ENCODE measurements at regions of chr6 and their contacts with region 1.

Region 1: GRCh38 chr6:47188588-47189021 is 121.1 kb downstream of the TNFRSF21 start:
- DNase-seq: peak; percentile 82 to 94
- H3K4me3 ChIP-seq: no peak overlapping the region
- H3K4me3 Mint-ChIP-seq: peak overlapping the region; percentile 23
- H3K27ac Mint-ChIP-seq: peak overlapping the region; percentile 96
- H3K4me1 ChIP-seq: peaks cover 38% of the 10 kb centered on the region
- H3K4me1 Mint-ChIP-seq: peaks cover 36% of the 10 kb centered on the region
- H3K27me3 ChIP-seq: no peaks in the 10 kb centered on the region
- H3K27me3 Mint-ChIP-seq: no peaks in the 10 kb centered on the region
- CTCF ChIP-seq: no peak

Region 2: DNA sequence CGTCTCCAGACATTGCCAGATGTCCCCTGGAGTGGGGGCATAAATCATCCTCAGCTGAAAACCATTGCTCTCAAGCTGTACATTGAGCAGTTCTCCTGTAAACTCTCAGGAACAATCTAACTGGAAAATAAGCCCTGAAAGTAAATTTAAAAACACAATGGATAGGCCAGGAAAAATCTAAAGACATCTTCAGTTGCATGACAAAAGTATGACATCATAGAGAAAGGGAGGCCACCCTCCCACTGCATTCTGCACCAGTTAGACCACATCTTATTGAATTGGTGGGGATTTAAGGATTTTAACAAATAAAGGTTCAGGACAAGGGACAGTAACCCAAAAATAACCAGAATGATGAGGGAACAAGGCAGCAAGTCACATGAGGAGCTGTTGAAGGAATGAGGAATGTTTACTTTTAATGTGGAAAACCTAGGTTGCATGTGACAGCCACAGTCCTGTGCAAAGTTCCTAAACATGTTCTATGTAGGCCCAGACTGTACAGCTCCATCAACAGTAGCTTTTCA is 458.7 kb before region 1 on chr6:
- CTCF ChIA-PET with region 1: no interaction called
- POLR2A ChIA-PET with region 1: no interaction called
- intact Hi-C with region 1: no loop called
- DNase-seq: no peak
- H3K4me3 ChIP-seq: no peak overlapping the region
- H3K4me3 Mint-ChIP-seq: no peak overlapping the region
- H3K27ac Mint-ChIP-seq: no peak overlapping the region
- H3K4me1 ChIP-seq: no peaks in the 10 kb centered on the region
- H3K4me1 Mint-ChIP-seq: peaks cover 7% of the 10 kb centered on the region
- H3K27me3 ChIP-seq: peaks cover 1% of the 10 kb centered on the region; the same call in 1 of the 2 replicates
- H3K27me3 Mint-ChIP-seq: peaks cover 10% of the 10 kb centered on the region
- CTCF ChIP-seq: no peak

Region 3: GRCh38 chr6:47111685-47112084 is 76.9 kb before region 1 on chr6:
- CTCF ChIA-PET with region 1: interaction called, 4 read pairs
- POLR2A ChIA-PET with region 1: no interaction called
- intact Hi-C with region 1: loop called (anchors 1 kb)
- DNase-seq: peak; percentile 72 to 88
- H3K4me3 ChIP-seq: no peak overlapping the region
- H3K4me3 Mint-ChIP-seq: peak overlapping the region; percentile 36
- H3K27ac Mint-ChIP-seq: peak overlapping the region; percentile 68
- H3K4me1 ChIP-seq: peaks cover 65% of the 10 kb centered on the region
- H3K4me1 Mint-ChIP-seq: peaks cover 36% of the 10 kb centered on the region
- H3K27me3 ChIP-seq: no peaks in the 10 kb centered on the region
- H3K27me3 Mint-ChIP-seq: no peaks in the 10 kb centered on the region
- CTCF ChIP-seq: no peak

Region 4: DNA sequence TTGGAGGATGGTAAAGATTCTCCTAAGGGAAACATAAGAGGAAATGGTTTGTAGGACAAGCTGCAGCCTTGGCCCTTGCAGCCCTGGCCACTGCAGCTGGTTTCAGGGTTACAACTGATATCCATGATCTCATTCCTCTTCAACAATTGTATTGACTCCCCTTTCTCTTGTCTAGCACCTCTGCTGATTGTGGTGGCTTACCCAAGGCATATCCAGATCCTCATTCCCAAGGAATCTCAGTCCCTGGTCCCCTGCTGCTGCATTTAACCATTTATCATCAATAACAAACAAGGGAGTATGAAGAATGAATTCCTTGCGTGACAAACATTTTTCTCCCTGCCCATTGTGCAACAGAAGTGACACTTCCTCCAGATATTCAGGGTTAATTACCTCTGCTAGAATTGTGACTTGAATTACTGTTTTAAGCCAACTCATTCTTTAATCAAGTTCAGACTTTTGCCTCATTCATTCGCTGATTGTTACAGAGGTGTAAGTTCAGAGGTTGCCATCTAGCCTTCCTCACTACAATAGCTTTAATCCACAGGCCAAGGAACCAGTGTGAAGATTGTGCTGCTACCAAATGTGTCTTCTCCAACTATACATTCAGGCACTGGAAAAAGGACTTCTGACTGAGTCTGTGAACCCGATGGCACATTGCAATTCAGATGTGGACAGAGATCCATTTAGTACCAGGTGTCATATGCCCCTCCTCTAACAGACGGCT is 35.4 kb before region 1 on chr6:
- CTCF ChIA-PET with region 1: no interaction called
- POLR2A ChIA-PET with region 1: no interaction called
- intact Hi-C with region 1: loop called (anchors 1 kb)
- DNase-seq: peak; percentile 34 to 47
- H3K4me3 ChIP-seq: no peak overlapping the region
- H3K4me3 Mint-ChIP-seq: no peak overlapping the region
- H3K27ac Mint-ChIP-seq: peak overlapping the region; percentile 62
- H3K4me1 ChIP-seq: peaks cover 43% of the 10 kb centered on the region
- H3K4me1 Mint-ChIP-seq: peaks cover 25% of the 10 kb centered on the region
- H3K27me3 ChIP-seq: no peaks in the 10 kb centered on the region
- H3K27me3 Mint-ChIP-seq: no peaks in the 10 kb centered on the region
- CTCF ChIP-seq: no peak

Region 5: GRCh38 chr6:47168183-47168582 is 20.4 kb before region 1 on chr6:
- CTCF ChIA-PET with region 1: no interaction called
- POLR2A ChIA-PET with region 1: no interaction called
- intact Hi-C with region 1: no loop called
- DNase-seq: peak; percentile 40 to 58
- H3K4me3 ChIP-seq: no peak overlapping the region
- H3K4me3 Mint-ChIP-seq: no peak overlapping the region
- H3K27ac Mint-ChIP-seq: no peak overlapping the region
- H3K4me1 ChIP-seq: peaks cover 24% of the 10 kb centered on the region
- H3K4me1 Mint-ChIP-seq: peaks cover 30% of the 10 kb centered on the region
- H3K27me3 ChIP-seq: no peaks in the 10 kb centered on the region
- H3K27me3 Mint-ChIP-seq: no peaks in the 10 kb centered on the region
- CTCF ChIP-seq: no peak

Region 6: GRCh38 chr6:47309291-47310130 is 120.9 kb after region 1 on chr6 and contains the start of gene TNFRSF21:
- CTCF ChIA-PET with region 1: no interaction called
- POLR2A ChIA-PET with region 1: no interaction called
- intact Hi-C with region 1: loop called (anchors 1 kb)
- DNase-seq: peak; percentile 93 to 95
- H3K4me3 ChIP-seq: peak within 1 kb of the TSS; percentile 91
- H3K4me3 Mint-ChIP-seq: peak within 1 kb of the TSS; percentile 88
- H3K27ac Mint-ChIP-seq: peak within 1 kb of the TSS; percentile 80
- H3K4me1 ChIP-seq: peaks cover 33% of the 10 kb centered on the region
- H3K4me1 Mint-ChIP-seq: peaks cover 18% of the 10 kb centered on the region
- H3K27me3 ChIP-seq: no peaks in the 10 kb centered on the region
- H3K27me3 Mint-ChIP-seq: no peaks in the 10 kb centered on the region
- CTCF ChIP-seq: peak; percentile 92 to 96
- total RNA-seq, gene TNFRSF21: 60.8 and 64.4 TPM in 2 replicates

Region 7: DNA sequence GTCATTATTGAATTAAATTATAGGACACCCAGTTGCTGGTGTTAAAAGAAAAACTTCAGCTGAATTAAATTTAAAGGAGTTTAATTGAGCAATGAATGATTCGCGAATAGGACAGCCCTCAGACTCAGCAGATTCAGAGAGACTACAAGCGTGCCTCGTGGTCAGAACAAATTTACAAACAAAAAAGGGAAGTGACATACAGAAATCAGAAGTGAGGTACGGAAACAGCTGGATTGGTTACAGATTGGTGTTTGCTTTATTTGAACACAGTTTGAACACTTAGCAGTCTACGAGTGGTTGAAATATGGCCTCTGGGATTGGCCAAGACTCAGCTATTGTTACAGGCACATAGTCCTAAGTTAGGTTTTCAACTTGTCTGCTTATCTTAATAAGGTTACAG is 146.9 kb after region 1 on chr6:
- CTCF ChIA-PET with region 1: no interaction called
- POLR2A ChIA-PET with region 1: no interaction called
- intact Hi-C with region 1: no loop called
- DNase-seq: no peak
- H3K4me3 ChIP-seq: no peak overlapping the region
- H3K4me3 Mint-ChIP-seq: no peak overlapping the region
- H3K27ac Mint-ChIP-seq: no peak overlapping the region
- H3K4me1 ChIP-seq: no peaks in the 10 kb centered on the region
- H3K4me1 Mint-ChIP-seq: peaks cover 14% of the 10 kb centered on the region
- H3K27me3 ChIP-seq: no peaks in the 10 kb centered on the region
- H3K27me3 Mint-ChIP-seq: no peaks in the 10 kb centered on the region
- CTCF ChIP-seq: no peak

Region 8: GRCh38 chr6:47376930-47377329 is 188.3 kb after region 1 on chr6:
- CTCF ChIA-PET with region 1: no interaction called
- POLR2A ChIA-PET with region 1: no interaction called
- intact Hi-C with region 1: no loop called
- DNase-seq: no peak
- H3K4me3 ChIP-seq: no peak overlapping the region
- H3K4me3 Mint-ChIP-seq: no peak overlapping the region
- H3K27ac Mint-ChIP-seq: no peak overlapping the region
- H3K4me1 ChIP-seq: peaks cover 11% of the 10 kb centered on the region
- H3K4me1 Mint-ChIP-seq: peaks cover 13% of the 10 kb centered on the region
- H3K27me3 ChIP-seq: no peaks in the 10 kb centered on the region
- H3K27me3 Mint-ChIP-seq: no peaks in the 10 kb centered on the region
- CTCF ChIP-seq: no peak